Adrenal gland (tissue), 19 donors: ENCODE measurements at regions of chr1 and their contacts with region 1.

Region 1: DNA sequence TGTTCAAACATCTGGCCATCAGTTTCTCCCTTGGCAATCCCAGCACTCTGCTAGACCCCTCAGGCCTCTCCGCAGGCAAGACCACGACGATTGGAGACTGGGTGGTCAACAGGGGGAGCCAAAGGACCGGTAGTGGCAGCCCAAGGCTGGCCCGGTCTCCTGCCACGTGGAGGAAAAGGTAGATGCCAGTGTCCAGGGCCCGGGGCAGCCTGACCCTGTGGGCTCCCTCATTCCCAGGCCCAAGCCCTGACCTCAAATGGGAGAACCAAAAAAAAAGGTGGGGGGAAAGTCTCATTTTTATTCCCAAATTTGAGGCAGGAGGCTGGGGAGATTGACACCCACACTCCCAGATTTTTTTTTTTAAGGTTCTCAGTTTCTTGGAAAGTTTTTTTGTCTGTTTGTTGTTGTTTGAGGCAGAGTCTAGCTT is 24.8 kb downstream of the S100A6 start:
- DNase-seq: peak; percentile 81 to 90 (median 86)
- H3K4me3 ChIP-seq: no peak overlapping the region
- H3K27ac ChIP-seq: peak overlapping the region in 1 of 5 donors; percentile 8
- H3K4me1 ChIP-seq: peaks cover 15 to 18% of the 10 kb centered on the region in 2 donors
- H3K27me3 ChIP-seq: no peaks in the 10 kb centered on the region
- CTCF ChIP-seq: peak; percentile 76 to 96 (median 93)
- POLR2A ChIP-seq: no peak

Region 2: DNA sequence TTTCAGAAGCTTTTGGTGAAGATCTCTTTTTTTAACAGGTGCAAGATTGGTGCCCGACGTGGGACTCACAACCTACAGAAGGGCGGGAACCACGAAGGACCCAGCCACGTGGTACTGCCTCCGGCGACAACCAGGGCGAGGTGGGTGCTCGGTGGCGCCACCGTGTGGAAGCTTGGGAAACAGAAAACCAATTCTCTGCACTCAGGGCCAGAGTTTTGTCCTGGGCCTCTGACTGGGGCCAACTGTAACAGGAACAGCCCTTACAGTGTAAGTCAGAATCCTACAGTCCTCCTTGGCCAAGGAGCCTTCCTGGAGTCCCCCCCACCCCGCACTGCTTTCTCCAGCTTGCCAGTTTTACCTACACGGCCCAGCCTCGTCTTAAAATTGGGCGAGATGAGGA is 106.2 kb before region 1 on chr1:
- intact Hi-C with region 1: no loop called
- DNase-seq: peak; percentile 27 to 62 (median 38)
- H3K4me3 ChIP-seq: no peak overlapping the region
- H3K27ac ChIP-seq: no peak overlapping the region
- H3K4me1 ChIP-seq: no peaks in the 10 kb centered on the region
- H3K27me3 ChIP-seq: no peaks in the 10 kb centered on the region
- CTCF ChIP-seq: peak in 5 of 6 experiments; percentile 35 to 58 (median 40)
- POLR2A ChIP-seq: no peak

Region 3: DNA sequence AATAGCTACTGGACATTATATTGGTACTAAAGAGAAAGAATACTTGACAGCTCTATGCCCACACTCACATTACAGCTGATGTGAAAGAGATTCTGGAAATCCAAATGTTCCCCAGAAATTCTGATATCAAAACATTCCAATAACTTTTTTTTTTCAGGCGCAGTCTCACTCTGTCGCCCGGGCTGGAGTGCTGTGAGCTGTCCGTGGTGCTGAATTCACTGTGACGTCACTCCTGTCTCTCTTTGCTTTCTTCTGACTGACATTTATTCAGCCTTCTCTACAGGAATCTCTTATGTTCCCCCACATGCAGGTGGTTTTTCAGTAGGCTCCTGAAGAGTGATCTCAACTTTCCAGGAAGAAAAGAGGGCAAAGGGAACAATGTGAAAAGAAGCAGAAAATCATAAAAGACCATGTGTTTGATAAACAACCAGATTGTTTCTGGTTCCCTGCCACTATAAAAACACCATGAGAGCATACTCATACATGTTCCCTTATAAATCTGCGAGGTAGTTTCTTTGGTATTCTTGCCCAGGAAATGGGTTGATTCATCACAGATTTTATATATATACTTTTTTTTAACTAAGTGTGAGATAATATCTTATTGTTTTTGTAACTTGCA is 88.4 kb before region 1 on chr1:
- intact Hi-C with region 1: no loop called
- DNase-seq: peak; percentile 59 to 88 (median 78)
- H3K4me3 ChIP-seq: no peak overlapping the region
- H3K27ac ChIP-seq: no peak overlapping the region
- H3K4me1 ChIP-seq: no peaks in the 10 kb centered on the region
- H3K27me3 ChIP-seq: no peaks in the 10 kb centered on the region
- CTCF ChIP-seq: no peak
- POLR2A ChIP-seq: no peak

Region 4: GRCh38 chr1:153553830-153554541 is 43.0 kb after region 1 on chr1:
- intact Hi-C with region 1: loop called in 1 of 2 experiments (anchors 5 kb)
- DNase-seq: peak in 1 of 7 donors; percentile 20
- H3K4me3 ChIP-seq: no peak overlapping the region
- H3K27ac ChIP-seq: peak overlapping the region in 4 of 5 donors; percentile 28 to 78 (median 63)
- H3K4me1 ChIP-seq: peaks cover 23 to 30% of the 10 kb centered on the region in 2 donors
- H3K27me3 ChIP-seq: no peaks in the 10 kb centered on the region
- CTCF ChIP-seq: no peak
- POLR2A ChIP-seq: no peak

Region 5: GRCh38 chr1:153763365-153764225 is 252.6 kb after region 1 on chr1:
- intact Hi-C with region 1: loop called (anchors 10 kb)
- DNase-seq: no peak
- H3K4me3 ChIP-seq: no peak overlapping the region
- H3K27ac ChIP-seq: peak overlapping the region in 1 of 5 donors; percentile 66
- H3K4me1 ChIP-seq: no peaks in the 10 kb centered on the region
- H3K27me3 ChIP-seq: no peaks in the 10 kb centered on the region
- CTCF ChIP-seq: no peak
- POLR2A ChIP-seq: no peak